Naive thymus-derived CD4-positive, alpha-beta T cell (primary cell): ENCODE measurements at regions of chr12 and their contacts with region 1.

Region 1: GRCh38 chr12:65232476-65233077 is 45.9 kb upstream of the MSRB3 start:
- DNase-seq: peak in 6 of 9 donors; percentile 8 to 39 (median 20)
- ATAC-seq: peak; percentile 51
- H3K4me3 ChIP-seq: no peak overlapping the region
- H3K4me3 Mint-ChIP-seq: peak overlapping the region in 2 of 10 donors; percentile 10 to 25
- H3K27ac ChIP-seq: no peak overlapping the region
- H3K27ac Mint-ChIP-seq: peak overlapping the region in 1 of 9 donors; percentile 36
- H3K4me1 ChIP-seq: no peaks in the 10 kb centered on the region
- H3K4me1 Mint-ChIP-seq: peaks cover 0 to 15% (median 12%) of the 10 kb centered on the region in 7 donors
- H3K27me3 ChIP-seq: no peaks in the 10 kb centered on the region
- H3K27me3 Mint-ChIP-seq: no peaks in the 10 kb centered on the region

Region 2: DNA sequence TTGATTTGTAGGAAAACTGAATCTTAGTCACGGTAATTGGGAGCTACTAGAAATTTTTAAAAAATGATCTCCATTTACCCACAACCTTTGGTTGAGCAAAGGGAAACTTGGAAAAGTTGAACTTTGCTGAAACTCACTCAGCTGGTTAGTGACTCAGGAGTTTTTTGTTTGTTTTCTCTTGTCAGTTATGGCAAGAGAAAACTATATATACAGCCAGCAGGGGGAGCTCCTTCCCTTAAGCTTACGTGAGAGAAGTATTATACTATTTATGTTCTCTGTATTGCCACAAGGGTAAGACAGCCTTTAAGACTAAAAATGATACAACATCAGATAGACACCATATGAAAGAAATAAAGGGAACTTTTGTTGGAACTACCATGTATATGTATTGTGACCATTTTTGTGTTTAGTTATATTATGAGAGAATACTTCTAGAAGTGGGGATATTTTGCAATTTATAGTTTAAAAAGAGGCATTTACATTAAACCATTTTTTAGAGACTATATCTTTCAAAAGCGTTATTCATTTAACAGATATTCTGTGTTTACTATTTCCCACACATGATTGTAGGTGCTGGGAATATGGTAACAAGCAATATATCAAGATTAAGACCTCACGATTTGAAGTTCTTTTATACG is 436.2 kb before region 1 on chr12:
- CTCF ChIA-PET with region 1: no interaction called
- POLR2A ChIA-PET with region 1: no interaction called
- intact Hi-C with region 1: loop called (anchors 2 kb)
- DNase-seq: peak in 8 of 9 donors; percentile 33 to 67 (median 58)
- ATAC-seq: peak; percentile 96
- H3K4me3 ChIP-seq: no peak overlapping the region
- H3K4me3 Mint-ChIP-seq: no peak overlapping the region
- H3K27ac ChIP-seq: no peak overlapping the region
- H3K27ac Mint-ChIP-seq: no peak overlapping the region
- H3K4me1 ChIP-seq: no peaks in the 10 kb centered on the region
- H3K4me1 Mint-ChIP-seq: peaks cover 0 to 3% (median 0%) of the 10 kb centered on the region in 7 donors
- H3K27me3 ChIP-seq: no peaks in the 10 kb centered on the region
- H3K27me3 Mint-ChIP-seq: peaks cover 12 to 28% (median 15%) of the 10 kb centered on the region in 5 donors

Region 3: DNA sequence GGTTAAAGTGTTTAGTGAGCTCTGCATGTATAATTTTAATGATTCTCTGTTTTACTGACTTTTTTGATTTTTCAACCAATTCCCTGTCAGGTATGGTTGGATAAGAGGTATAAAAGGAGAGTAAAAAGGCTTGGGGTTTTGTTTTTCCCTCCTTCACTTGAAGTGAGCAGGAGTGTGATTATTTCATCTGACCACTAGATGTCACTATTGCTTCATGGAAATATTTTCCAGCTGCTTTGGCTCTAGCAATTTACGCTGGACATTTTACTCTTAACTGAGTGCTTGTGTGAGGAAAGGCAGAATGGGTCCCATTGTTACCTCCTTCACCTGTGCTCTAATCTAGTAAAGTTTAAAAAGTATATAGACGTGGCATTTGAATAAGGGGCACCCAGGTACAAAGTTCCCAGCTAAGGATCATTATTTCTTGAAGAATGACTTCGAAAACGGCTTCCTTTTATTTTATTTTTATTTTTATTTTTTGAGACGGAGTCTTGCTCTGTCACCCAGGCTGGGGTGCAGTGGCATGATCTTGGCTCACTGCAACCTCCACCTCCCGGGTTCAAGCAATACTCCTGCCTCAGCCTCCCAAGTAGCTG is 341.6 kb before region 1 on chr12:
- CTCF ChIA-PET with region 1: interaction called, 36 read pairs
- POLR2A ChIA-PET with region 1: no interaction called
- intact Hi-C with region 1: loop called (anchors 1 kb)
- DNase-seq: peak in 7 of 9 donors; percentile 16 to 61 (median 51)
- ATAC-seq: peak; percentile 60
- H3K4me3 ChIP-seq: no peak overlapping the region
- H3K4me3 Mint-ChIP-seq: no peak overlapping the region
- H3K27ac ChIP-seq: no peak overlapping the region
- H3K27ac Mint-ChIP-seq: no peak overlapping the region
- H3K4me1 ChIP-seq: no peaks in the 10 kb centered on the region
- H3K4me1 Mint-ChIP-seq: peaks cover 0 to 2% (median 0%) of the 10 kb centered on the region in 7 donors
- H3K27me3 ChIP-seq: no peaks in the 10 kb centered on the region
- H3K27me3 Mint-ChIP-seq: peaks cover 8 to 17% (median 15%) of the 10 kb centered on the region in 5 donors

Region 4: GRCh38 chr12:65121049-65121955 is 111.3 kb before region 1 on chr12 and contains the start of gene WIF1:
- CTCF ChIA-PET with region 1: no interaction called
- POLR2A ChIA-PET with region 1: no interaction called
- intact Hi-C with region 1: loop called (anchors 5 kb)
- DNase-seq: peak in 5 of 9 donors; percentile 6 to 34 (median 10)
- ATAC-seq: peak; percentile 66
- H3K4me3 ChIP-seq: peak within 1 kb of the TSS; percentile 22
- H3K4me3 Mint-ChIP-seq: peak within 1 kb of the TSS; percentile 42 to 77 (median 62)
- H3K27ac ChIP-seq: no peak within 1 kb of the TSS
- H3K27ac Mint-ChIP-seq: peak within 1 kb of the TSS in 1 of 9 donors; percentile 62
- H3K4me1 ChIP-seq: no peaks in the 10 kb centered on the region
- H3K4me1 Mint-ChIP-seq: peaks cover 0 to 12% (median 8%) of the 10 kb centered on the region in 7 donors
- H3K27me3 ChIP-seq: peaks cover 0 to 6% of the 10 kb centered on the region in 2 donors
- H3K27me3 Mint-ChIP-seq: peaks cover 41 to 59% (median 52%) of the 10 kb centered on the region in 5 donors
- total RNA-seq, gene WIF1: not detected

Region 5: DNA sequence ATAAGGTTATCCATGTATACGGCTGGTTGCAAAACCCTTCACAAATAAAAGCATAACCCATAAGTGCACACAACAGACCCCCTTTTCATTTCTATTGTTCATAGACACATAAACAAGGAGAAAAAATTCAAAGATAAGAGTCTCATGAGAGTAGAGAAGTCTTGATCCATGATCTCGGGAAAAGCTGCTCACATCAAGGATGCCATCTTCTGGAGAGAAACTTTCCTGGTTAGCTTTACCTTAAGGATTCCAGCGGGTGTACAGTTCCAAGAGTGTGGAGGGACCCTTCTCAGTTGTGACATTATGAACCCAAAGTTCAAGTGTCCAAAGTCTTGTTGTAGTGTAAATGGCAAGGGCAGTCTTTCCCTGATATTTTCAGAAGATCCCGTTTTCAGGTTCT is 753.5 kb after region 1 on chr12:
- CTCF ChIA-PET with region 1: no interaction called
- POLR2A ChIA-PET with region 1: no interaction called
- intact Hi-C with region 1: loop called in 1 of 2 experiments (anchors 5 kb)
- DNase-seq: no peak
- ATAC-seq: no peak
- H3K4me3 ChIP-seq: no peak overlapping the region
- H3K4me3 Mint-ChIP-seq: no peak overlapping the region
- H3K27ac ChIP-seq: no peak overlapping the region
- H3K27ac Mint-ChIP-seq: no peak overlapping the region
- H3K4me1 ChIP-seq: no peaks in the 10 kb centered on the region
- H3K4me1 Mint-ChIP-seq: no peaks in the 10 kb centered on the region
- H3K27me3 ChIP-seq: no peaks in the 10 kb centered on the region
- H3K27me3 Mint-ChIP-seq: peaks cover 0 to 14% (median 0%) of the 10 kb centered on the region in 5 donors